Cardiac septum (tissue), 1 donor: ENCODE measurements at regions of chr7 and their contacts with region 1.

Region 1: DNA sequence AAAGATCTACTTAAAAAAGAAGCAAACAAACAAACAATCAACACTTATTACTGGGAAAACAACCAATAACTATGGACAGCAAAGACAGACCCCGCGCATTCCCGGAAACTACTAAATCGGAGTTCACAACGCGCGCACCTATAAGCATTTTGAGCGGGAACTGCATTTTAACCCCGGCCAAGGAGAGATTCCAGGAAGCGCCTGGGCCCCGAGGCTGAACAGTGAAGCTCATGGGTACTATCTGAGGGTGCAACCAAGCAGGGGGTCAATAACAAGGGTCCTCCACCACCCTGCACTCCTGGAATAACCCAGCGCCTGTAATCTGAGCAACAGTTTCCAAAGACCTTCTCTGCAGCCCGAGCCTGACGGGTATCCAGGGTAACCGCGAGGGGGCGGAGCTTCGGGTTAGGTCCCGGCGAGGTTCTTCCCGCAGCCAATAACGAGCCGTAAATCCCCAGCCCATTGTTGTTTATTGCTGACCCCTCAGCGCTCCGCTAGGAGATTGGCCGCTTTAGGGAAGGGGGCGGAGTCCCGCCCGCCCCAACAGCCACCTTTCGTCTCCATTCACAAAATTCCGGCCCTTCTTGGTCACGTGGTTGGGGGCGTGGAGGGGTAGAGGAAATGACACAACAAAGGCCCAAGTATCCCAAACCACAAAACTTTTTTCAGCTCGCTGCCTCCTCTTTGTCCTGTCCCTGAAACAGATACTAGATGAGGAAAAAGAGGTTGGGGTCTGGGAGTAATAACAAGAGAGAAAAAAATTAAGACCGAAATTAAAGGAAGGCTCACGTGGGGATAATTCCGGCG is 1.7 kb upstream of the ETV1 start:
- DNase-seq: peak; percentile 97

Region 2: GRCh38 chr7:14024406-14024805 is 33.2 kb after region 1 on chr7:
- intact Hi-C with region 1: no loop called
- DNase-seq: no peak

Region 3: GRCh38 chr7:14207138-14207537 is 216.0 kb after region 1 on chr7:
- intact Hi-C with region 1: loop called (anchors 5 kb)
- DNase-seq: no peak

Region 4: GRCh38 chr7:14457568-14458453 is 466.6 kb after region 1 on chr7:
- intact Hi-C with region 1: loop called (anchors 2 kb)
- DNase-seq: no peak